Ovary (tissue), 10 donors: ENCODE measurements at regions of chr5 and their contacts with region 1.

Region 1: GRCh38 chr5:72523960-72524582 is 16.9 kb upstream of the ZNF366 start:
- DNase-seq: no peak
- H3K4me3 ChIP-seq: no peak overlapping the region
- H3K27ac ChIP-seq: no peak overlapping the region
- H3K4me1 ChIP-seq: no peaks in the 10 kb centered on the region
- H3K27me3 ChIP-seq: no peaks in the 10 kb centered on the region
- CTCF ChIP-seq: peak in 1 of 3 donors; percentile 49
- EP300 ChIP-seq: no peak
- POLR2A ChIP-seq: no peak

Region 2: DNA sequence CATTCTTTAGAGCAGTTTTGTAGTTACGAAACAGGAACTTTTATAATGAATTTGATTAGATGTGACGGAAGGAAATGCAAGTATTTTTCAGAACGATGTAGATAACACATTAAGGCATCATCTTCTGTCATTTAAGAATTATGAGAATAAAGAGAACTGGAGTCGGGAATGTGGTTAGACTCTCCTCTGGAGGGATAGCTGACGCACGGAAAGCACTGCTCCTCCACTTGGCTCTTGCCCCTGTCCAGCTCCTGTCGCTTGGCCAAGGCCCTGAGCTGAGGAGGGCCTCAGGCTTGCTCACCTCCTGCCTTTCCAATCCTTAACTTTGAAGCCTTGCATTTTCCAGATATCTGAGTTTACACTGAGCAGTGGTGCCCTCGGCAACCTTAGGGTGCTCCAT is 356.3 kb before region 1 on chr5:
- intact Hi-C with region 1: no loop called
- DNase-seq: peak in 4 of 5 donors; percentile 30 to 64 (median 38)
- H3K4me3 ChIP-seq: no peak overlapping the region
- H3K27ac ChIP-seq: no peak overlapping the region
- H3K4me1 ChIP-seq: peaks cover 10% of the 10 kb centered on the region
- H3K27me3 ChIP-seq: no peaks in the 10 kb centered on the region
- CTCF ChIP-seq: no peak
- EP300 ChIP-seq: no peak
- POLR2A ChIP-seq: no peak

Region 3: DNA sequence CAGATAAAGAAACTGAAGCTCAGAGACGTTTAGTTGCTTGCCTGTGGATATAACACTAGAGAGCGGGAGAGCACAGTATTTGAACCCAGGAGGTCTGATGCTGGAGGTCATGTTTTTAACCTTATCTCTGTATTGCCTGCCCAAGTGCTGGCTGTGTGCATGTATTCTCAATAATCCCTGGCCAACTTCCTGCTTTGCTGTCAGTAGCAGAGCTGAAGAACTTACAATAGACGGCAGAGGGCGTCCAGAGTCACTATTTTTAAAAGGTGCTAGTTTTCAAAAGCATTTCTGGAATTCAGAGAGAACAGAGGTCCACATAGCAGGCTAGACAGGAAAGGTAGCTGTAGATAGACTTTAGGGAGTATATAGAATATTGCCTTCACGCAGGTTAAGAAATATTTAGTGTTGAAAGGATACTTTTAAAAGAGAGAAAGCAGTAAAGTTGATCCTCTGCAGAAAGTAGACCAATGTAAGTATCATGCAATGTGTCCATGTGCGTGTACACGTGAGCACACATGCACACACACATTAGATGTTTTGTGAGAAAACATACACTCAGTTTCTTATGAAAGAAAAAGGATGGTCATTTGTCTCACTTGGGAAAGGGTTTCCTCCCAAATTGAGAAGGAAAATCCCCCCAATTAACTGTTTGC is 157.6 kb before region 1 on chr5:
- intact Hi-C with region 1: loop called in 3 of 4 experiments (anchors 5 to 10 kb)
- DNase-seq: peak; percentile 45 to 76 (median 48)
- H3K4me3 ChIP-seq: no peak overlapping the region
- H3K27ac ChIP-seq: no peak overlapping the region
- H3K4me1 ChIP-seq: no peaks in the 10 kb centered on the region
- H3K27me3 ChIP-seq: no peaks in the 10 kb centered on the region
- CTCF ChIP-seq: peak; percentile 38 to 86 (median 69)
- EP300 ChIP-seq: no peak
- POLR2A ChIP-seq: no peak

Region 4: DNA sequence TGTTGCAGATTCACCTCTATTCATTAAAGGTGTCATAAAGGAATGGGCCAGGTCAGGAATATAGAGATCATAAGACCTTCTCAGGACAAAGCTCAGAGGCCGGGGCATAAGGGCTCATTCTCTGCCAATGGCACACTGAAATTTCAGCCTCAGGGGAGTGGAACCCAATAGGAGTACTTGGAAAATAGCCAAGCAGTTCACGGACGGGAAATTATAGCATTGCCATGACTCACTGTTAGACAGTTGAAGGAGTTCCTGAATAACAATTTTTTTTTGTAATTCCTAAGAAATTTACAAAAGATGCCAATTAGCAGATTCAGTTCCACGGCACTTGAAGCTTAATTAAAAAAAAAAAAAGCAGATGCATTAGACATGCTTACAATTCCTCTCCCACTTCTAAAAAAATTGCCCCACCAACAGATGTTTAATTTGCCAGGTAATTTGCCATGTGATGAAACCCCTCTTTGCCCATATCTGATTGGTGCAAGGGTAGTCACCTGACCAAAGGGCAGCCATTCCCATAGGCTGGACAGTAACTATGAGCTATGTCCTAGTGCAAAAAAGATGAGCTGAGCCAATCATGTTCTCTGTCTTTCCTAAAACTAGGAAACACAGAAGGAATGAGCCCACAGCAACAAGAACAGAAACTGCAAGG is 145.3 kb before region 1 on chr5:
- intact Hi-C with region 1: loop called in 1 of 4 experiments (anchors 10 kb)
- DNase-seq: no peak
- H3K4me3 ChIP-seq: no peak overlapping the region
- H3K27ac ChIP-seq: no peak overlapping the region
- H3K4me1 ChIP-seq: no peaks in the 10 kb centered on the region
- H3K27me3 ChIP-seq: no peaks in the 10 kb centered on the region
- CTCF ChIP-seq: no peak
- EP300 ChIP-seq: no peak
- POLR2A ChIP-seq: no peak